CD4-positive, alpha-beta T cell (primary cell): ENCODE measurements at regions of chr16 and their contacts with region 1.

Region 1: DNA sequence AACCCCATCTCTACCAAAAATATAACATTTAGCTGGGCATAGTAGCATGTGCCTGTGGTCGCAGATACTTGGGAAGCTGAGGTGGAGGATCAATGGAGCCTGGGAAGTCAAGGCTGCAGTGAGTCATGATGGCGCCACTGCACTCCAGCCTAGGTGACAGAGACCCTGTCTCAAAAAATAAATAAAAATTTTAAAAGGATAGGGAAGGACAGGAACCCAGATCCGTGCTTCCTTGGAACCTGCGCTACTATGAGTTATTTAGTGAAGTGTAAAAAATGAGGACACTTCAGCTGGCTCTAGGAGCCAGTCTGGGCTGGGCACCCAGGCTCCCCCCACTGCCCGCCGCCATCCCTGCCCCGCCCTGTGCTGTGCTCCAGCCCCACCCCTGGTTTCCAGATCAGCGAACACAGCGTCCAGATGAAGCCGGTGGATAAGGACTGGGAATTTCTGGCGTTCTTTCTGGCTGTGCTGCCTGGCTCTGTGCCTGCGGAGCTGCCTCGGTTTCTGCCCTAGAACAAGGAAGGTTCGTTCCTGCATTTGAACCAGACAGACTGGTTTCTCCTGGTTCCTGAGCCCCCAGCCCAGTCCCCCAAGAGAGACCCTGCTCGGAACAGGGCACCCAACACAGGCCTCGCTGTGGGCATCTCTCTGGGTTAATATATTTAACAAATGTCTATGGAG is 18.5 kb downstream of the PLLP start:
- DNase-seq: no peak
- ATAC-seq: no peak
- H3K4me3 ChIP-seq: no peak overlapping the region
- H3K4me3 Mint-ChIP-seq: peak overlapping the region; percentile 43
- H3K27ac ChIP-seq: peak overlapping the region in 1 of 2 donors; percentile 57
- H3K27ac Mint-ChIP-seq: peak overlapping the region; percentile 97
- H3K4me1 ChIP-seq: peaks cover 55% of the 10 kb centered on the region
- H3K4me1 Mint-ChIP-seq: peaks cover 53% of the 10 kb centered on the region
- H3K27me3 ChIP-seq: no peaks in the 10 kb centered on the region
- H3K27me3 Mint-ChIP-seq: no peaks in the 10 kb centered on the region
- CTCF ChIP-seq: no peak

Region 2: GRCh38 chr16:57277586-57277985 is 11.6 kb after region 1 on chr16:
- CTCF ChIA-PET with region 1: no interaction called
- POLR2A ChIA-PET with region 1: interaction called, 25 read pairs
- intact Hi-C with region 1: loop called in 1 of 2 experiments (anchors 1 kb)
- DNase-seq: peak in 13 of 14 experiments; percentile 28 to 82 (median 63)
- ATAC-seq: peak; percentile 96
- H3K4me3 ChIP-seq: no peak overlapping the region
- H3K4me3 Mint-ChIP-seq: peak overlapping the region; percentile 58
- H3K27ac ChIP-seq: no peak overlapping the region
- H3K27ac Mint-ChIP-seq: peak overlapping the region; percentile 73
- H3K4me1 ChIP-seq: peaks cover 38% of the 10 kb centered on the region
- H3K4me1 Mint-ChIP-seq: peaks cover 63% of the 10 kb centered on the region
- H3K27me3 ChIP-seq: no peaks in the 10 kb centered on the region
- H3K27me3 Mint-ChIP-seq: no peaks in the 10 kb centered on the region
- CTCF ChIP-seq: no peak

Region 3: DNA sequence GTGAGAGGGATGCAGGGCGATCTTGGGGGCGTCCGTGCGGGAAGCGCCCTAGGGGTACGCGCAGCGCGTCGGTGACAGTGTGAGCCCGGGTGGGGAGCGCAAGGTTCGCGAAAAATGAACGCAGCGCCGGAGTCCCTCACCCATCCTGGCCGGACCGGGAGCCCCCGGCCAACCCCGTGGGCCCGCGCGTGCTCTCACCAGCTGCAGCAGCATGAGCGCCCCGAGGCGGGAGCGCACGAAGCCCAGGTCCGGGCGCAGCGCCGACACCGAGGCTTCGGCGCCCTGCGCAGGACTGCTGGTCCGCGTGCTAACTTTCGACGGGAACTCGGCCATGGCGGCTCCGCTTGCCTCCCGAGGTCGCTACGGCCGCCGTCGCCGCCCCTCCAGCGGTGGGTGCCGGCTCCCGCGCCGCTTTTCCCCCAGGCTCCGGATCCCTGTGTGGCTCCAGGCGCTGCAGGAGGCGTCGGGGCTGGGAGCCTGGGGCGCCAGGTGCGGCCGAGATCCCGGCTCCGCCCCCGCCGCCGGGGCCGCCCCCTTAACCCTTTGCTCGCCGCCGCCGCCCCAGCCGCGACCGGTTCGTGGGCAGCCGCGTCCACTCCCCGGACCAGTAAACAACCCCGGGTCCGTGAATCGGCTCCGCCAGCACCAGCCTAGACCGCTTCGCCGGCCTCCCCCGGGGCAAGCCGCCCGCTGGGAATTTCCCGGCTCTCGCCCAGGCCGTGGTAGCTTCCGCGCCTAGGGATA is 18.4 kb after region 1 on chr16 and contains the start of gene PLLP:
- CTCF ChIA-PET with region 1: no interaction called
- POLR2A ChIA-PET with region 1: interaction called, 25 read pairs
- intact Hi-C with region 1: loop called in 1 of 2 experiments (anchors 2 kb)
- DNase-seq: peak in 11 of 14 experiments; percentile 17 to 72 (median 43)
- ATAC-seq: peak; percentile 73
- H3K4me3 ChIP-seq: peak within 1 kb of the TSS; percentile 64
- H3K4me3 Mint-ChIP-seq: peak within 1 kb of the TSS; percentile 89
- H3K27ac ChIP-seq: no peak within 1 kb of the TSS
- H3K27ac Mint-ChIP-seq: peak within 1 kb of the TSS; percentile 49
- H3K4me1 ChIP-seq: peaks cover 37% of the 10 kb centered on the region
- H3K4me1 Mint-ChIP-seq: peaks cover 38% of the 10 kb centered on the region
- H3K27me3 ChIP-seq: peaks cover 4 to 5% of the 10 kb centered on the region in 2 experiments
- H3K27me3 Mint-ChIP-seq: peaks cover 4% of the 10 kb centered on the region
- CTCF ChIP-seq: no peak
- total RNA-seq, gene PLLP: 1.8 to 2.5 TPM